Spleen (tissue), 13 donors: ENCODE measurements at regions of chr6 and their contacts with region 1.

Region 1: GRCh38 chr6:1596088-1596852 is 13.4 kb upstream of the FOXC1 start:
- DNase-seq: peak; percentile 91
- H3K4me3 ChIP-seq: peak overlapping the region in 1 of 8 donors; percentile 26
- H3K27ac ChIP-seq: no peak overlapping the region
- H3K4me1 ChIP-seq: peaks cover 0 to 10% (median 7%) of the 10 kb centered on the region in 6 donors
- H3K27me3 ChIP-seq: peaks cover 0 to 87% (median 36%) of the 10 kb centered on the region in 7 donors
- CTCF ChIP-seq: peak; percentile 77 to 97 (median 94)
- POLR2A ChIP-seq: no peak

Region 2: DNA sequence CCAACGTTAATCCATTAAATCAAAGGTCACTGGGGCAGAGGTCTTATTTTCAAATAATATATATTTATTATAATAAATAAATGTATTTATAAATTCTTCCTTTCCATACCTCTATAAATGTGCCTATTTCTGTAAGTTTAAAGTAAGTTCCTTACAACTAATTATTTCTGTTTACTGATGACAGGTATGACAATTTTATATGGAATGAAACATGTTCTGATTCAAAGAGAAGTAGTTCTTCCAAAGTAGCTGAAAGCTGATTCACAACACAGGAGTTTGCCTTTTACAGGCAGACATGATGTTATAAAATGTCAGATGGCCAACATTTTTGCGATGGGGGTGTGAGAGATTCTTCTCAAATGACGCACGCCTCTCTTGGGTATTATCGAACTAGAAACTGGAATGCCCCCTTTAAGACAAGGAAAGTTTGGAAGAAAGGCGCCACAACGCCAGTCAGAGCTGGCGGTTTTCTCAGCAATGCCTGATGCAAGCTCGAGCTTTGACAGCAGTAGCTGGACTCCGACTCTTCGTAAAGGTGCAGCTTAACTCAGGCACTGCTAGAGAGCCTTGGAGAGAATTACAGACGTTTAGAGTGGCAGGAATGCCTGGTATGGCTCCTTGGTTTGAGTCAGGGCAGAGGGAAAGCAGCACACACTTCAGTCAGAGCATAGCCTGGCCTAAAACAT is 105.5 kb after region 1 on chr6:
- intact Hi-C with region 1: no loop called
- DNase-seq: no peak
- H3K4me3 ChIP-seq: no peak overlapping the region
- H3K27ac ChIP-seq: no peak overlapping the region
- H3K4me1 ChIP-seq: no peaks in the 10 kb centered on the region
- H3K27me3 ChIP-seq: no peaks in the 10 kb centered on the region
- CTCF ChIP-seq: no peak
- POLR2A ChIP-seq: no peak

Region 3: DNA sequence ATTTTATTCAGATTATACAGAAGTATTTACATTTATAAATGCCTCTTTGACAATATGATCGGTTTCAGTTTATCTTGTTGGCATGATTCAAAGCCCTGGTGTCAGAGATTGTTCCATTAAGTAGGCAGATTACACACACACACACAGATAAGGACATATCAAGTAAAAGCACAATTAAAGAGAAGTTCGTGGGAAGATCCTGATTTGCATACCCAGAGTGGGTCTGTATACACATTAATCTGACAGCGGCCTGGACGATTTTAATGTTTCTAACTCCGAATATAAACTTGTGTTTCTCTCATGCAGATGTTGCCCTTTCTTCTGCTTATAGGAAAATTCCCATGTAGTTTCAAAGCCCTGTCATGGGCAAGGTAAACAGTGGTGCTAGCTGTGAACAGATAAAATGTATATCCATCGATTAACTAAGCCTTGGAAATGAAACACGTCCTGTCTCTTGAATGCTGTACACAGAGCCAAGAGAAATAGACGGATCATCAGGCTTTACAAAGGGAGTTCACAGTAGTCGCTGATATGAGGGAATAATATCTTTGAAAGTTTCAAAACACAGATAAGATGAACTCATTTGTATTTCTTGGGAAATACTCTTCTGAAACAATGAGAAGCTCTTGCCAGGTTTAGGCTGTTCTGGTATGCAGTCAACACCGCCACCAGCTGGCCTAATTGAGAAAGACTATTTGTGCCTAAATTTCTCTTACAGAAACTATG is 757.3 kb after region 1 on chr6:
- intact Hi-C with region 1: loop called (anchors 5 kb)
- DNase-seq: no peak
- H3K4me3 ChIP-seq: no peak overlapping the region
- H3K27ac ChIP-seq: no peak overlapping the region
- H3K4me1 ChIP-seq: peaks cover 0 to 5% (median 0%) of the 10 kb centered on the region in 6 donors
- H3K27me3 ChIP-seq: no peaks in the 10 kb centered on the region
- CTCF ChIP-seq: peak; percentile 27 to 71 (median 59)
- POLR2A ChIP-seq: no peak

Region 4: DNA sequence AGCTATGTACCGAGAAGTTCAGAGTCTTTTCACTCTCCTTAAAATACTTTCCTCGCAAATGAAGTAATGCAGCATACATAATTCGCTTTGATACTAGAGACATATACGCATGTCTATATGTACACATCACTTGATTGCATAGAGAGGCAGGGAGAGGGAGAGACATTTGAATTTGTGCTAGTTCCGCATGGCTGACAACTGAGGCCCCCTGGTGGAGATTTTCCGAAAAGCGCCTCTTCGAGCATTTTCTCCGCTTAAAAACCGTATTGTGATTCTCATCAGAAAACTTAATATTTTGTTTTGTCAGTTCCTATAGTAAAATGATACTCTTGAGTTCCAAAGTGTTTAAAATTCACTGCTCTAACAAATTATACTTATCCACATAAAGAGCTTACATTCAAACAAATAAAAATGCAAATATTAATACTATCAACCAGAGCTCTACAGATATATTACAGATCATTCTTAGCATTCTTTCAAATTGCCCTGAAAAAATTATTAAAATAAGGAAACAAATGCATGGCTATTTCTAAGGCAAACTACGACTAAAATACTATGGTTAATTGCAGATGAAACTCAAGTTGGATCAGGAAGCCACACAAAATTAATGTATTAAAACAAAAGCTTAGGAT is 1153.8 kb after region 1 on chr6:
- intact Hi-C with region 1: loop called (anchors 5 kb)
- DNase-seq: peak; percentile 77
- H3K4me3 ChIP-seq: no peak overlapping the region
- H3K27ac ChIP-seq: no peak overlapping the region
- H3K4me1 ChIP-seq: peaks cover 0 to 9% (median 6%) of the 10 kb centered on the region in 6 donors
- H3K27me3 ChIP-seq: peaks cover 0 to 15% (median 0%) of the 10 kb centered on the region in 7 donors
- CTCF ChIP-seq: peak in 10 of 11 experiments; percentile 57 to 90 (median 82)
- POLR2A ChIP-seq: no peak